Mammary epithelial cell (primary cell): ENCODE measurements at regions of chr15 and their contacts with region 1.

Region 1: DNA sequence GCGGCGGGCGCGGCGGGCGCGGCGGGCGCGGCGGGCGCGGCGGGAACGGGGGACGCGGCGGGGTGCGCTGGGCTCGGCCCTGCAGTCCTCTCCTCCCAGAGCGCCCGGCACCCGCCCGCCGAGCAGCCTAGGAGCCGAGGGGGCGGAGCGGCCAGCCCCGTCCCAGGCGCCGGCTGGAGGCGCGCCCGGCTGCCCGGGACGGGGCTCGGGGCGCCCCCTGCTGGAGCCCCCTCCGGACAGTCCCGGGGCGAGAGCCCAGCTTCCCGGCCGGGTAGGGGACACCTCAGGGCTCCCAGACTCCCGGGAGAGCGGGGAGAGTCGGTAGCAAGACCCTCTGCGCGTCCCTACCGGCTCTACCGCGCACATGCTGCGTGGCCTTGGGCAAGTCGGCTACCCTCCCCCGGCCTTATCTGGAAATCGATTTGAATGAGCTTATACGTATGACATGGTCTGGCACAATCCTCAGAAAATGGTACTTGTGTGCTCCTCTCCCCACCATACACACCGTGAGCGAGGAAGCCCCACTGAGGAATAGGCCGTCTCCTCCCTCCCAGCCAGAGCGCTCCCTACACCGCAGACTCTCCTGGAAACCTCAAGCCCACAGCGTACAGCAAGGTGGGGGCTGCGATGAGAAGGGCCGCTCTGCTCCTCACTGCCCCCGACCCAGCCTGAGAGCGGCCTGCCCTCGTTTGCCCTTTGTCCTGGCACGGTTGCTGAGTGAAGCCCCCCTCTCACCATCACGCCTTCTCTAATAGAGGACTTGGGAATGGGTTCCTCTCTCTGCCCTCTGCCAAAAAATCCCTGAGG is at the start of gene DAPK2:
- DNase-seq: peak; percentile 56
- H3K4me3 ChIP-seq: peak within 1 kb of the TSS; percentile 26 to 64 (median 54)
- H3K27ac ChIP-seq: no peak within 1 kb of the TSS
- H3K4me1 ChIP-seq: peaks cover 8% of the 10 kb centered on the region
- H3K27me3 ChIP-seq: peaks cover 2% of the 10 kb centered on the region
- CTCF ChIP-seq: peak; percentile 27 to 73
- total RNA-seq, gene DAPK2: 0.82 to 2.3 TPM

Region 2: GRCh38 chr15:63610200-63610841 is 436.2 kb before region 1 on chr15:
- CTCF ChIA-PET with region 1: no interaction called
- dilution Hi-C with region 1: no loop called
- in situ Hi-C with region 1: loop called in 1 of 2 experiments (anchors 25 kb)
- intact Hi-C with region 1: loop called (anchors 5 kb)
- DNase-seq: peak; percentile 67
- H3K4me3 ChIP-seq: no peak overlapping the region
- H3K27ac ChIP-seq: no peak overlapping the region
- H3K4me1 ChIP-seq: peaks cover under 1% of the 10 kb centered on the region
- H3K27me3 ChIP-seq: no peaks in the 10 kb centered on the region
- CTCF ChIP-seq: peak; percentile 81 to 85

Region 3: DNA sequence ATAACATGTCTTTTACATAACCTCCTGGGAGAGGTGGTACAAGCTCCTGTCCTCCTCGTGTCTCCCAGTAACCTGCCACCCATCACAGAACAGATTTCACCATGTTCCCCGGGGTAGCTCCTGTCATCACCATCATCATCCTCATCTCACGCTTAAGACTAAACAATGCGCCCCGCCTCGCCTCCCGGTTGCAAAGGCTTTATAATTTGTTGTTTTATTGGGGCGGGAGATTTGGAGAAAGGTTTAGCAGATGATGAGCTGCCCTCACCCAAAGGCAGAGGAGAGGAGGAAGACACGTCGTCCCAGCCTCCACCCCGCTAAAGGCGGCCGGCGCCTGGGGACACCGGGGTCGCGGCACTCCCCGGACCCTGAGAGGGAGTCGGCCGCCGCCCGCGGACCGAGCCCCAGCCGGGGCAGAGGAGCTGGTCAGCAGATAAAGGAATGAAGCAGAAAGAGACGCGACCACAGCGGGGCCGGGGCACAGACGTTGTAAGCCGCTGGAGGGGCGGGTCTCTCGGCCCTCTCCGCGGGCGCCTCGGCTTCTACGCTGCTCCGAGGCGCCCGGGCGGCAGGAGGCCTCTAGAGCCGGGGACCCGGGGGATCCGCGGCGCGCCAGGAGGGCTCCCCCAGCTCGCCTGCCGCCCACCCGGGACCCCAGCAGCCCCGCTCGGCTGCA is 213.4 kb before region 1 on chr15:
- CTCF ChIA-PET with region 1: no interaction called
- dilution Hi-C with region 1: no loop called
- in situ Hi-C with region 1: no loop called
- intact Hi-C with region 1: loop called (anchors 5 kb)
- DNase-seq: peak; percentile 32
- H3K4me3 ChIP-seq: peak overlapping the region; percentile 71 to 98 (median 95)
- H3K27ac ChIP-seq: peak overlapping the region; percentile 80
- H3K4me1 ChIP-seq: peaks cover 12% of the 10 kb centered on the region
- H3K27me3 ChIP-seq: no peaks in the 10 kb centered on the region
- CTCF ChIP-seq: no peak

Region 4: GRCh38 chr15:63945007-63945788 is 101.4 kb before region 1 on chr15:
- CTCF ChIA-PET with region 1: interaction called, 23 read pairs
- dilution Hi-C with region 1: no loop called
- in situ Hi-C with region 1: loop called in 1 of 2 experiments (anchors 5 kb)
- intact Hi-C with region 1: loop called (anchors 1 kb)
- DNase-seq: peak; percentile 61
- H3K4me3 ChIP-seq: no peak overlapping the region
- H3K27ac ChIP-seq: peak overlapping the region; percentile 41
- H3K4me1 ChIP-seq: peaks cover 20% of the 10 kb centered on the region
- H3K27me3 ChIP-seq: no peaks in the 10 kb centered on the region
- CTCF ChIP-seq: peak; percentile 97 to 99

Region 5: GRCh38 chr15:64004582-64004981 is 42.0 kb before region 1 on chr15:
- CTCF ChIA-PET with region 1: no interaction called
- dilution Hi-C with region 1: no loop called
- in situ Hi-C with region 1: no loop called
- intact Hi-C with region 1: loop called (anchors 1 kb)
- DNase-seq: peak; percentile 96
- H3K4me3 ChIP-seq: no peak overlapping the region
- H3K27ac ChIP-seq: peak overlapping the region; percentile 12
- H3K4me1 ChIP-seq: peaks cover 38% of the 10 kb centered on the region
- H3K27me3 ChIP-seq: no peaks in the 10 kb centered on the region
- CTCF ChIP-seq: no peak